Mammary epithelial cell (primary cell): ENCODE measurements at regions of chr11 and their contacts with region 1.

Region 1: DNA sequence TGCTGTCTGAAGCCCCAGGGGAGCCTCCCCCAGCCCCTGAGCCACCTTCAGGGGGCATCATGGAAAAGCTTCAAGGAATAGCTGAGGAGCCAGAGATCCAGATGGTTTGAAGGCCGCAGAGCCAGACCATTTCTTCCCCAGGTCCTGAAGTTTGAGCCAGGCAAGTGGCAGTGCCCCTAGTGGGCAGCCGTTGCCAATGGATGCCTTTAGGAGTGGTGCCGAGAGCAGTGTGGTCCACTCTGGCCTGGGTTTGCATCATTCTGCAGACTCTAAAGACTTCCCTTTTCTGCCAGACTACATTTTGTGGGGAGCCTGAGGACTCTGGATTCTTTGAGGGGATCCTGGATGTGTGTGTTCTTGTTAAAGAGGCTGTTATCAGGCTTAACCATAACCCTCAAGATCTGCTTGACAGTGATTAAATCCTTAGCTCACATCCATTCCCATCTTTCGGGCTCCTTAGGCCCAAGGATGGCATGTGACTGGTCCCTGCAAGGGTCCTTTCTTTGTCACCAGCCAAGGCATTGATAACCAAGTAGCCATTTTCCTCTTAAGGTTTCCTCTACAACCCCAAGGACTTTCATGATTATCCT is 13.1 kb downstream of the HINFP start:
- DNase-seq: no peak
- H3K4me3 ChIP-seq: no peak overlapping the region
- H3K27ac ChIP-seq: no peak overlapping the region
- H3K4me1 ChIP-seq: no peaks in the 10 kb centered on the region
- H3K27me3 ChIP-seq: no peaks in the 10 kb centered on the region
- CTCF ChIP-seq: peak; percentile 49 to 70

Region 2: GRCh38 chr11:119181677-119182412 is 47.4 kb after region 1 on chr11:
- CTCF ChIA-PET with region 1: no interaction called
- dilution Hi-C with region 1: loop called (anchors 10 kb)
- in situ Hi-C with region 1: no loop called
- intact Hi-C with region 1: no loop called
- DNase-seq: no peak
- H3K4me3 ChIP-seq: no peak overlapping the region
- H3K27ac ChIP-seq: no peak overlapping the region
- H3K4me1 ChIP-seq: no peaks in the 10 kb centered on the region
- H3K27me3 ChIP-seq: no peaks in the 10 kb centered on the region
- CTCF ChIP-seq: no peak

Region 3: GRCh38 chr11:119262668-119263351 is 128.3 kb after region 1 on chr11:
- CTCF ChIA-PET with region 1: no interaction called
- dilution Hi-C with region 1: loop called (anchors 10 kb)
- in situ Hi-C with region 1: no loop called
- intact Hi-C with region 1: no loop called
- DNase-seq: peak; percentile 31
- H3K4me3 ChIP-seq: no peak overlapping the region
- H3K27ac ChIP-seq: no peak overlapping the region
- H3K4me1 ChIP-seq: peaks cover 23% of the 10 kb centered on the region
- H3K27me3 ChIP-seq: no peaks in the 10 kb centered on the region
- CTCF ChIP-seq: peak; percentile 2 to 20

Region 4: GRCh38 chr11:119400860-119401259 is 266.4 kb after region 1 on chr11:
- CTCF ChIA-PET with region 1: no interaction called
- dilution Hi-C with region 1: no loop called
- in situ Hi-C with region 1: no loop called
- intact Hi-C with region 1: no loop called
- DNase-seq: no peak
- H3K4me3 ChIP-seq: no peak overlapping the region
- H3K27ac ChIP-seq: no peak overlapping the region
- H3K4me1 ChIP-seq: no peaks in the 10 kb centered on the region
- H3K27me3 ChIP-seq: no peaks in the 10 kb centered on the region
- CTCF ChIP-seq: no peak